Caco-2 (cell line): ENCODE measurements at regions of chr4 and their contacts with region 1.

Region 1: GRCh38 chr4:81040012-81040659 is 9.6 kb downstream of the BMP3 start:
- DNase-seq: peak in 1 of 2 experiments; percentile 20
- H3K4me3 ChIP-seq: no peak overlapping the region
- H3K4me3 Mint-ChIP-seq: no peak overlapping the region
- H3K27ac Mint-ChIP-seq: no peak overlapping the region
- H3K4me1 ChIP-seq: no peaks in the 10 kb centered on the region
- H3K4me1 Mint-ChIP-seq: no peaks in the 10 kb centered on the region
- H3K27me3 ChIP-seq: no peaks in the 10 kb centered on the region
- H3K27me3 Mint-ChIP-seq: peaks cover 2% of the 10 kb centered on the region
- CTCF ChIP-seq: peak; percentile 39 to 55

Region 2: GRCh38 chr4:80138551-80139538 is 901.3 kb before region 1 on chr4:
- CTCF ChIA-PET with region 1: no interaction called
- POLR2A ChIA-PET with region 1: no interaction called
- intact Hi-C with region 1: no loop called
- DNase-seq: no peak
- H3K4me3 ChIP-seq: no peak overlapping the region
- H3K4me3 Mint-ChIP-seq: no peak overlapping the region
- H3K27ac Mint-ChIP-seq: no peak overlapping the region
- H3K4me1 ChIP-seq: no peaks in the 10 kb centered on the region
- H3K4me1 Mint-ChIP-seq: peaks cover 7% of the 10 kb centered on the region
- H3K27me3 ChIP-seq: no peaks in the 10 kb centered on the region
- H3K27me3 Mint-ChIP-seq: no peaks in the 10 kb centered on the region
- CTCF ChIP-seq: no peak

Region 3: DNA sequence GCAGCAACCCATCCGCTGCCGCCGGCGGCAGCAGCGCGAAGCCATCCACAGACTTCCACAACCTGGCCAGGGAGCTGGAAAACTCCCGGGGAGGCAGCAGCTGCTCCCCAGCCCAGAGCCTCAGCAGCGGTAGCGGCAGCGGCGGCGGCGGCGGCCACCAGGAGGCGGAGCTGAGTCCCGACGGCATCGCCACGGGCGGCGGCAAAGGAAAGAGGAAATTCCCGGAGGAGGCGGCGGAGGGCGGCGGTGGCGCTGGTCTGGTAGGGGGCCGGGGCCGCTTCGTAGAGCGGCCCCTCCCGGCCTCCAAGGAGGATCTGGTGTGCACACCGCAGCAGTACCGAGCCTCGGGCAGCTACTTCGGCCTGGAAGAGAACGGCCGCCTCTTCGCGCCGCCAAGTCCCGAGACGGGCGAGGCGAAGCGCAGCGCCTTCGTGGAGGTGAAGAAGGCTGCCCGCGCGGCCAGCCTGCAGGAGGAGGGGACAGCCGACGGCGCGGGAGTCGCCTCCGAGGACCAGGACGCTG is 837.9 kb before region 1 on chr4:
- CTCF ChIA-PET with region 1: no interaction called
- POLR2A ChIA-PET with region 1: no interaction called
- intact Hi-C with region 1: loop called (anchors 1 kb)
- DNase-seq: peak; percentile 64 to 84
- H3K4me3 ChIP-seq: peak overlapping the region; percentile 35
- H3K4me3 Mint-ChIP-seq: peak overlapping the region; percentile 67
- H3K27ac Mint-ChIP-seq: no peak overlapping the region
- H3K4me1 ChIP-seq: no peaks in the 10 kb centered on the region
- H3K4me1 Mint-ChIP-seq: peaks cover 8% of the 10 kb centered on the region
- H3K27me3 ChIP-seq: peaks cover 1% of the 10 kb centered on the region
- H3K27me3 Mint-ChIP-seq: peaks cover 30% of the 10 kb centered on the region
- CTCF ChIP-seq: peak; percentile 67 to 74

Region 4: GRCh38 chr4:80619070-80619674 is 421.0 kb before region 1 on chr4:
- CTCF ChIA-PET with region 1: no interaction called
- POLR2A ChIA-PET with region 1: no interaction called
- intact Hi-C with region 1: loop called (anchors 2 kb)
- DNase-seq: no peak
- H3K4me3 ChIP-seq: no peak overlapping the region
- H3K4me3 Mint-ChIP-seq: no peak overlapping the region
- H3K27ac Mint-ChIP-seq: no peak overlapping the region
- H3K4me1 ChIP-seq: no peaks in the 10 kb centered on the region
- H3K4me1 Mint-ChIP-seq: no peaks in the 10 kb centered on the region
- H3K27me3 ChIP-seq: no peaks in the 10 kb centered on the region
- H3K27me3 Mint-ChIP-seq: no peaks in the 10 kb centered on the region
- CTCF ChIP-seq: peak in 1 of 2 experiments; percentile 20

Region 5: GRCh38 chr4:81084029-81084428 is 43.9 kb after region 1 on chr4:
- CTCF ChIA-PET with region 1: no interaction called
- POLR2A ChIA-PET with region 1: no interaction called
- intact Hi-C with region 1: no loop called
- DNase-seq: peak in 1 of 2 experiments; percentile 19
- H3K4me3 ChIP-seq: no peak overlapping the region
- H3K4me3 Mint-ChIP-seq: no peak overlapping the region
- H3K27ac Mint-ChIP-seq: no peak overlapping the region
- H3K4me1 ChIP-seq: no peaks in the 10 kb centered on the region
- H3K4me1 Mint-ChIP-seq: no peaks in the 10 kb centered on the region
- H3K27me3 ChIP-seq: no peaks in the 10 kb centered on the region
- H3K27me3 Mint-ChIP-seq: no peaks in the 10 kb centered on the region
- CTCF ChIP-seq: peak; percentile 24 to 53